Activated CD4-positive, alpha-beta T cell treated with anti-CD3 and anti-CD28 coated beads for 36 hours (primary cell): ENCODE measurements at regions of chr13 and their contacts with region 1.

Region 1: GRCh38 chr13:94362411-94362909 is 117.0 kb downstream of the DCT start:
- DNase-seq: peak; percentile 74
- ATAC-seq: peak; percentile 100
- H3K4me3 Mint-ChIP-seq: no peak overlapping the region
- H3K27ac Mint-ChIP-seq: no peak overlapping the region
- H3K4me1 Mint-ChIP-seq: peaks cover 8% of the 10 kb centered on the region
- H3K27me3 Mint-ChIP-seq: peaks cover 2% of the 10 kb centered on the region

Region 2: DNA sequence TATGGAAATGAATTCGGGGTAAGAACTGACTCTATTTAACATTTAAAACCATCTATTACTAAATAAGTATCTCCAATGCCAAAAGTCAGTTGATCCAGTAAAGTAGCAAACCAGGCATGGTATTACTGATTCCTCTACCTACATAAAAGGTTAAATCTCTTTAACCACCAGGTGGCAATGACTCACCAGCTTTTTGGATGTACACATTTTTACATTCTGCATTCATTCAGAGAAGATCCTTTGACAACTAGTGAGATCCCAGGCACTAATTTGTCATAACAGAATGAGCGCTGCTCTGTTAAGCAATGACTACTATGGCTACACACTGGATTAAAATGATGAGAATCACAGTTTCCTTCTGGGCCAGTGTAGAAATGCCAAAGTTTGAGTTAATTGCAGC is 1465.6 kb before region 1 on chr13:
- CTCF ChIA-PET with region 1: no interaction called
- POLR2A ChIA-PET with region 1: no interaction called
- intact Hi-C with region 1: loop called in 1 of 2 experiments (anchors 2 kb)
- DNase-seq: no peak
- ATAC-seq: no peak
- H3K4me3 Mint-ChIP-seq: no peak overlapping the region
- H3K27ac Mint-ChIP-seq: no peak overlapping the region
- H3K4me1 Mint-ChIP-seq: no peaks in the 10 kb centered on the region
- H3K27me3 Mint-ChIP-seq: no peaks in the 10 kb centered on the region

Region 3: DNA sequence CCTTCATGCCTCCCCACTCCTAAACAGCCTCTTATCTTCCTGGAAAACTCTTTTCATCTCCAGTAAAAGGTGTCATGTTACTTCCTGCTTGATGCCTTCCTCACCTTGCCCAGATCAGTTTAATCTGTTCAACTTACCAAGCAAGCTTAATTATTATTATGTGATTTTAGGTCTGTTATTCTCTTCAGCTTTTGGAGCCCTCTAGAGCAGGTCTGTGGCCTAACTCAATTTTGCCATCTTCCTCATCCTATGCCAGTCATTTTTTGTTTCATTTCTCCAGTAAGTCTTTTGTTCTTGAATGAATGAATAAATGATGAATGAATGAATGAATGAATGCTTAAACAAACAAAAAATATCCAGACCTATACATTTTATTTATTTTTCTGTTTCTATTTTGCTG is 411.3 kb before region 1 on chr13:
- CTCF ChIA-PET with region 1: no interaction called
- POLR2A ChIA-PET with region 1: no interaction called
- intact Hi-C with region 1: loop called in 1 of 2 experiments (anchors 10 kb)
- DNase-seq: no peak
- ATAC-seq: no peak
- H3K4me3 Mint-ChIP-seq: no peak overlapping the region
- H3K27ac Mint-ChIP-seq: no peak overlapping the region
- H3K4me1 Mint-ChIP-seq: peaks cover 2% of the 10 kb centered on the region
- H3K27me3 Mint-ChIP-seq: peaks cover 1% of the 10 kb centered on the region

Region 4: GRCh38 chr13:94115054-94115453 is 247.4 kb before region 1 on chr13:
- CTCF ChIA-PET with region 1: no interaction called
- POLR2A ChIA-PET with region 1: no interaction called
- intact Hi-C with region 1: loop called in 1 of 2 experiments (anchors 5 kb)
- DNase-seq: no peak
- ATAC-seq: no peak
- H3K4me3 Mint-ChIP-seq: no peak overlapping the region
- H3K27ac Mint-ChIP-seq: no peak overlapping the region
- H3K4me1 Mint-ChIP-seq: no peaks in the 10 kb centered on the region
- H3K27me3 Mint-ChIP-seq: peaks cover 6% of the 10 kb centered on the region

Region 5: GRCh38 chr13:94239135-94239534 is 123.3 kb before region 1 on chr13:
- CTCF ChIA-PET with region 1: interaction called, 5 read pairs
- POLR2A ChIA-PET with region 1: no interaction called
- intact Hi-C with region 1: loop called in 1 of 2 experiments (anchors 5 kb)
- DNase-seq: peak; percentile 23
- ATAC-seq: peak; percentile 68
- H3K4me3 Mint-ChIP-seq: no peak overlapping the region
- H3K27ac Mint-ChIP-seq: no peak overlapping the region
- H3K4me1 Mint-ChIP-seq: peaks cover 40% of the 10 kb centered on the region
- H3K27me3 Mint-ChIP-seq: no peaks in the 10 kb centered on the region

Region 6: GRCh38 chr13:94620286-94620896 is 257.9 kb after region 1 on chr13:
- CTCF ChIA-PET with region 1: interaction called, 13 read pairs
- POLR2A ChIA-PET with region 1: no interaction called
- intact Hi-C with region 1: loop called (anchors 5 kb)
- DNase-seq: peak; percentile 51
- ATAC-seq: peak; percentile 63
- H3K4me3 Mint-ChIP-seq: no peak overlapping the region
- H3K27ac Mint-ChIP-seq: no peak overlapping the region
- H3K4me1 Mint-ChIP-seq: peaks cover 10% of the 10 kb centered on the region
- H3K27me3 Mint-ChIP-seq: no peaks in the 10 kb centered on the region

Region 7: GRCh38 chr13:94667190-94667589 is 304.7 kb after region 1 on chr13:
- CTCF ChIA-PET with region 1: no interaction called
- POLR2A ChIA-PET with region 1: no interaction called
- intact Hi-C with region 1: no loop called
- DNase-seq: peak; percentile 44
- ATAC-seq: peak; percentile 88
- H3K4me3 Mint-ChIP-seq: no peak overlapping the region
- H3K27ac Mint-ChIP-seq: peak overlapping the region; percentile 89
- H3K4me1 Mint-ChIP-seq: peaks cover 38% of the 10 kb centered on the region
- H3K27me3 Mint-ChIP-seq: peaks cover 21% of the 10 kb centered on the region